ENCODE measurements at regions of chr2 and their contacts with region 1.

Region 1: DNA sequence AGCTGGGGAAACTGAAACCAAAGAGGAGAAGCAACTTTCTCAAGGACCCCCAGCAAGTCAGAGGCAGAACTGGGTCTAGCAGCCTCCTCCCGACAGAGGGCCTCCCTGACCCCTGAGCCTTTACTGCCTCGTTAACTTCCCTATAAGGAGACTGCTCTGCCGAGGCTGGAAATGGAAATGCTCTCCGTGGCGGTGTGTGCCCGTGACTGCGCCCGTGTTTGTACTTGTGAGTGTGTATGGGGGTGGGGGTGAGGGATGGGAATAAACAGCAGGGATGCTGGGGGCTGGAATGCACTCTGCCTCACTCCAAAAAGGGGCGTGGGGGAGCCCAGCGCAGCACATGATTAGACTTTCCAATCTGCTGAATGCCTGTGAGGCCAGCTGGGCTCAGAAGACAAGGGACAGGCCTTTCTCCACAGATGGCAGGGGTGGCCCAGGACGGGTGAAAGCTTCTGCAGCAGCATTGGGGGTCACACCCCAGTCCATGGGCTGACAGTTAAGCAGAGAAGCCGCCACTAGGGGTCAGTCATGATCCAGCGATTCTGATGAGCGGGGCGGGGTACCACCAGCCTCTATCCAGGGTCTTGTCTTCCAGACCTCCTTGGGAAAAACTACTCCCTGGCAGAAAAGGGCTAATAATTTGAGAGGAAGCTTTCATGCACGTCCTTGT is 26.8 kb downstream of the MPHOSPH10 start:
- DNase-seq: no peak
- H3K4me3 ChIP-seq: no peak overlapping the region
- H3K27ac ChIP-seq: no peak overlapping the region
- H3K4me1 ChIP-seq: no peaks in the 10 kb centered on the region
- H3K27me3 ChIP-seq: no peaks in the 10 kb centered on the region
- CTCF ChIP-seq: peak; percentile 66 to 79

Region 2: DNA sequence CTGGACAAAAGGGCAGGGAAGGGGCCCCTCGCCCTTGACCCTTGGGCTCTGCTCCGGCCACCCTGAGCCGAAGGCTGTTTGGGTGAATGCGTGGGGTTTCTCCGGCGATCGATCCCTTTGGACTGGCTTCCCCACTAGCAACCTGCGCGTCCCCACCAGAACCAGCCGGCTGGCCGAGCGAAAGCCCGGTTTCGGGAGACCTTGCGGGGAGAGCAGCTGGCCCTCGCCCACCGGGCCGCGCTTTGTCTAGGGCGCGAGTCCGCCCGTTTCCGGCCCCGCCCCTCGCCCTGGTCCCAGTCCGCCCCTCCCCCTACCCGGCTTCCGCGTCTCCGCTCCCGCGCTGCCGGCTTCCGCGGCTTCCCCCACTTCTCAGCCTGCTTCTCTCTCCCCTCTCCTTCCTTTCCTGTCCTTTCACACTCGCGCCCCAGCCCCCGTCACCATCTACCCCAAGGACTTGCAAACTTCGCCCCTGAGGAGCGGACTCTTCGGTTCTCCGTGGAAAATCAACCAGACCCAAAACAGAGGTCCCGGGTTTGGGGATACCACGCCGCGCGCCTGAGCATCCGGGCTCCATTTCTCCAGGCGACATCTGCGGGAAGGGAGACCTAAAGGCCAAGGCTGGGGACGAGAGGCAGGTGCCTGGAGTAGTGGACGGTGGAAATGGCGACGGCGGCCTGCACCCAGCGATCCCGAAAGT is 269.6 kb before region 1 on chr2:
- CTCF ChIA-PET with region 1: no interaction called
- dilution Hi-C with region 1: no loop called
- in situ Hi-C with region 1: no loop called
- intact Hi-C with region 1: no loop called
- DNase-seq: no peak
- H3K4me3 ChIP-seq: peak overlapping the region; percentile 10 to 38 (median 26)
- H3K27ac ChIP-seq: no peak overlapping the region
- H3K4me1 ChIP-seq: peaks cover 8% of the 10 kb centered on the region
- H3K27me3 ChIP-seq: peaks cover 50% of the 10 kb centered on the region
- CTCF ChIP-seq: no peak

Region 3: GRCh38 chr2:71018625-71019024 is 138.6 kb before region 1 on chr2:
- CTCF ChIA-PET with region 1: no interaction called
- dilution Hi-C with region 1: no loop called
- in situ Hi-C with region 1: no loop called
- intact Hi-C with region 1: loop called (anchors 2 kb)
- DNase-seq: no peak
- H3K4me3 ChIP-seq: no peak overlapping the region
- H3K27ac ChIP-seq: no peak overlapping the region
- H3K4me1 ChIP-seq: peaks cover 6% of the 10 kb centered on the region
- H3K27me3 ChIP-seq: no peaks in the 10 kb centered on the region
- CTCF ChIP-seq: no peak

Region 4: DNA sequence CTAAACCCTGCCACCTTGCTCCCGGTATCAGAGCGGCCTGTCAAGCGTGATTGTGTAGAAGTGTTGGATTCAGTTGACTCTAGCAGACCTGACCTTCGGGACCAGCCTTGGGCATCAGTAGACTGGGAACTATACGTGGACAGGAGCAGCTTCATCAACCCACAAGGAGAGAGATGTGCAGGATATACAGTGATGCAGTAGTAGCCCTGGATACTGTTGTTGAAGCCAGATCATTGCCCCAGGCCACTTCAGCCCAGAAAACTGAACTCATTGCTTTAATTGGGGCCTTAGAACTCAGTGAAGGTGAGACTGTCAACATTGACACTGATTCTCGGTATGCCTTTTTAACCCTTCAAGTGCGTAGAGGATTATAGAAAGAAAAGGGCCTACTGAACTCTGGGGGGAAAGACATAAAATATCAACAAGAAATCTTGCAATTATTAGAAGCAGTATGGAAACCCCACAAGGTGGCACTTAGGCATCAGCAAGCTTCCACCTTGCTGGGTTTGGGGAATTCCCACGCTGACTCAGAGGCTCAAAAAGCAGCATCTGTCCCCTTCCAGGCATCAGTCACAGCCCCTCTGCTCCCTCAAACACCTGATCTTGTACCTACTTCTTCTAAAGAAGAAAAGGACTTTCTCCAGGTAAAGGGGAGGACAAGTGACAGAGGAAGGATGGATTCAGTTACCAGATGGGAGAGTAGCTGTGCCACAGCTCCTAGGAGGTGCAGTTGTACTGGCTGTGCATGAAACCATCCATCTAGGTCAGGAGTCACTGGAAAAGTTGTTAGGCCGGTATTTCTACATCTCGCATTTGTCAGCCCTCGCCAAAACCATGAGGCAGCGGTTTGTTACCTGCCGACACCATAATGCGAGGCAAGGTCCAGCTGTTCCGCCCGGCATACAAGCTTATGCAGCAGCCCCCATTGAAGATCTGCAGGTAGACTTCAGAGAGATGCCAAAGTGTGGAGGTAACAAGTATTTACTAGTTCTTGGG is 107.6 kb before region 1 on chr2:
- CTCF ChIA-PET with region 1: interaction called, 3 read pairs
- dilution Hi-C with region 1: no loop called
- in situ Hi-C with region 1: no loop called
- intact Hi-C with region 1: loop called (anchors 1 kb)
- DNase-seq: peak; percentile 77
- H3K4me3 ChIP-seq: no peak overlapping the region
- H3K27ac ChIP-seq: no peak overlapping the region
- H3K4me1 ChIP-seq: peaks cover 6% of the 10 kb centered on the region
- H3K27me3 ChIP-seq: no peaks in the 10 kb centered on the region
- CTCF ChIP-seq: peak; percentile 20 to 56

Region 5: GRCh38 chr2:71282495-71282894 is 125.2 kb after region 1 on chr2:
- CTCF ChIA-PET with region 1: no interaction called
- dilution Hi-C with region 1: no loop called
- in situ Hi-C with region 1: no loop called
- intact Hi-C with region 1: loop called (anchors 2 kb)
- DNase-seq: peak; percentile 3
- H3K4me3 ChIP-seq: no peak overlapping the region
- H3K27ac ChIP-seq: no peak overlapping the region
- H3K4me1 ChIP-seq: peaks cover 6% of the 10 kb centered on the region
- H3K27me3 ChIP-seq: no peaks in the 10 kb centered on the region
- CTCF ChIP-seq: peak in 1 of 2 donors; percentile 24

Region 6: DNA sequence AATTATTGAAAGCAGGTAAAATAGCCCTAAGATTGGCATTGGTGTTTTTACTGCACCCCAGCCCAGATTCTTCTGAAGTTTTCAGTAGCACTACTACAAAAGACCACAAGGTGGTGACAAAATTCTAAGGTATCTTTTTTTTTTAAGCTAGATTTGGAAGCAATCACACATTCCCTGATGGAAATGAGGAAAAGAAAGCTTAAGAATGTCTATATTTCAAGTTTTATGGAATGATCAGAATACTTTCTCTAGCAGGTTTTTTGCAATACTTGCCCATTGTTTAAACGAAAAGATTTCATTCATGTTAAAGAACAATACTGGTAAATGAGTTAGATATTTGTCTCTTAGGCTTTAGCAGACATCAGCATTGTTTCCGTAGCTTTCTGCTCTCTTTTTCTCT is 142.2 kb after region 1 on chr2:
- CTCF ChIA-PET with region 1: interaction called, 6 read pairs
- dilution Hi-C with region 1: no loop called
- in situ Hi-C with region 1: no loop called
- intact Hi-C with region 1: loop called (anchors 5 kb)
- DNase-seq: peak; percentile 16
- H3K4me3 ChIP-seq: no peak overlapping the region
- H3K27ac ChIP-seq: no peak overlapping the region
- H3K4me1 ChIP-seq: peaks cover 12% of the 10 kb centered on the region
- H3K27me3 ChIP-seq: no peaks in the 10 kb centered on the region
- CTCF ChIP-seq: peak; percentile 64 to 71